MCF 10A (cell line): ENCODE measurements at regions of chr11 and their contacts with region 1.

Region 1: GRCh38 chr11:47373876-47374720 is 4.2 kb downstream of the SPI1 start:
- DNase-seq: peak; percentile 74
- H3K4me3 Mint-ChIP-seq: no peak overlapping the region
- H3K27ac Mint-ChIP-seq: no peak overlapping the region
- H3K4me1 Mint-ChIP-seq: peaks cover 9% of the 10 kb centered on the region
- H3K27me3 Mint-ChIP-seq: peaks cover 8% of the 10 kb centered on the region
- CTCF ChIP-seq: peak; percentile 93

Region 2: DNA sequence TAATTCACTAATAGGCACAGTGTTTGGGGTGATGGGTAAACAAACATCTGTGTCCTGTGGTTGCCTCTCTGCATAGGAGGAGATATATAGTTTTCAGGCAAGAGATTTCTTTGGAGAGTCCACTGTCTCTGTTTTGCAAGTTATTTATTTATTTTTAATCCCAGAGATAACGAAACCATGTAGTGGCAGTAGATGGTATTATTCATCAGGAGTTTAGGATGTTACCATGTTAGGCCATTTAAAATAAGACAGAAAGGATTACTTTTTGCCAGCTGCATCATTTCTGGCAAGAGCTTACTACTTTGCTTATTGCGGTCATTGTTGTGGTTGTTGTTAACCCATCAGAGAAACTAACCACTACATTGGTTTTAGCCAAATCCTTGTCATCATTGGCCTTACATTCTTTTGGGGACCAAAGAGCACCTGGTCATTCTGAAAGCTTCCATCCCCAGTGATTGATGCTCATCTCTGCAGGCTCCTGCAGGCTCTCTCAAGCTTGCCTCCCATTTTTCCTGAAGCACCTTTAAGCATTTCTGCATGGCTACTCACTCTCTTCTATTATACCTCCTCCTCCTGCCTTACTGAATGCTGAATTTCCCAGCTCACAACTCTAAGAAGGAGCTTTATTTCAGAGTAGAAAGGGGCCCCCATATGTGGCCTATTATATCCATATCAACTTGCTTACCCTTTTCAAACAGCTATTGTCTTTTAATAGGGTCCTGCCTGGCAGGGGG is 353.1 kb before region 1 on chr11:
- CTCF ChIA-PET with region 1: no interaction called
- POLR2A ChIA-PET with region 1: no interaction called
- intact Hi-C with region 1: no loop called
- DNase-seq: no peak
- H3K4me3 Mint-ChIP-seq: no peak overlapping the region
- H3K27ac Mint-ChIP-seq: no peak overlapping the region
- H3K4me1 Mint-ChIP-seq: no peaks in the 10 kb centered on the region
- H3K27me3 Mint-ChIP-seq: no peaks in the 10 kb centered on the region
- CTCF ChIP-seq: no peak

Region 3: DNA sequence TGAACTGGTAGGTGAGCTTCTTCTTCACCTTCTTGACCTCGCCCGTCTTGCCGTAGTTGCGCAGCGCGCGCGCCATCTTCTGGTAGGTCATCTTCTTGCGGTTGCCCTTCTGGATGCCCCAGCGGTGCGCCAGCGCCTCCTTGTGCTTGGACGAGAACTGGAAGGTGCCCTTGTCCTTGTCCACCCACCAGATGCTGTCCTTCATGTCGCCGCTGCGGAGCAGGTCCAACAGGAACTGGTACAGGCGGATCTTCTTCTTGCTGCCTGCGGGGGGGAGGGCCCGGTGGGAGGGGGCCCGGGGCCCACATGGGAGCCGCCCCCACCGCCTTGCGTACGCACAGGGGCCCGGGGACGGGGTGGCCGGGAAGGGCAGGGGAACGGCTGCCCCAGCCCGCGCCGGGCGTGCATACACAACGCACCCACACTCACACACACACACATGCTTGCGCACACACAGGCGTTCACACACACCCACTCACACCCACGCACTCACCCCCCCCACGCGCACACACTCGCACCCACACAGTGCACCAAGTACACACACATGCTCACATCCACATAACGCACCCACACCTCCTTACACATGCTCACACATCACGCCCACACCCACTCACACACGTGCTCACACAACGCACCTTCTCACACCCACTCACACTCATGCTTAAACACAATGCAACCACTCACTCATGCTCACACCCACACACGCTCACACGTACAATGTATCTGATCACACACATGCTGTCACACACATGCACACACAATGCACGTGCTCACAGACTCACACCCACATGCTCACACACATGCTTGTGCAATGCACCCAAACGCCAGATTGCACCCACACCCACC is 18.6 kb before region 1 on chr11:
- CTCF ChIA-PET with region 1: interaction called, 12 read pairs
- POLR2A ChIA-PET with region 1: no interaction called
- intact Hi-C with region 1: no loop called
- DNase-seq: peak; percentile 94
- H3K4me3 Mint-ChIP-seq: no peak overlapping the region
- H3K27ac Mint-ChIP-seq: no peak overlapping the region
- H3K4me1 Mint-ChIP-seq: peaks cover 5% of the 10 kb centered on the region
- H3K27me3 Mint-ChIP-seq: no peaks in the 10 kb centered on the region
- CTCF ChIP-seq: peak; percentile 99

Region 4: GRCh38 chr11:47387911-47388678 is 14.0 kb after region 1 on chr11:
- CTCF ChIA-PET with region 1: interaction called, 20 read pairs
- POLR2A ChIA-PET with region 1: interaction called, 3 read pairs
- intact Hi-C with region 1: no loop called
- DNase-seq: no peak
- H3K4me3 Mint-ChIP-seq: no peak overlapping the region
- H3K27ac Mint-ChIP-seq: no peak overlapping the region
- H3K4me1 Mint-ChIP-seq: no peaks in the 10 kb centered on the region
- H3K27me3 Mint-ChIP-seq: no peaks in the 10 kb centered on the region
- CTCF ChIP-seq: no peak

Region 5: GRCh38 chr11:47393150-47394049 is 19.3 kb after region 1 on chr11:
- CTCF ChIA-PET with region 1: interaction called, 21 read pairs
- POLR2A ChIA-PET with region 1: no interaction called
- intact Hi-C with region 1: no loop called
- DNase-seq: no peak
- H3K4me3 Mint-ChIP-seq: no peak overlapping the region
- H3K27ac Mint-ChIP-seq: no peak overlapping the region
- H3K4me1 Mint-ChIP-seq: no peaks in the 10 kb centered on the region
- H3K27me3 Mint-ChIP-seq: no peaks in the 10 kb centered on the region
- CTCF ChIP-seq: no peak

Region 6: GRCh38 chr11:47399860-47400767 is 26.0 kb after region 1 on chr11:
- CTCF ChIA-PET with region 1: interaction called, 28 read pairs
- POLR2A ChIA-PET with region 1: no interaction called
- intact Hi-C with region 1: no loop called
- DNase-seq: no peak
- H3K4me3 Mint-ChIP-seq: no peak overlapping the region
- H3K27ac Mint-ChIP-seq: no peak overlapping the region
- H3K4me1 Mint-ChIP-seq: no peaks in the 10 kb centered on the region
- H3K27me3 Mint-ChIP-seq: no peaks in the 10 kb centered on the region
- CTCF ChIP-seq: no peak

Region 7: GRCh38 chr11:47407746-47408590 is 33.9 kb after region 1 on chr11 and contains the start of gene SLC39A13:
- CTCF ChIA-PET with region 1: interaction called, 28 read pairs
- POLR2A ChIA-PET with region 1: interaction called, 5 read pairs
- intact Hi-C with region 1: loop called (anchors 1 kb)
- DNase-seq: peak; percentile 91
- H3K4me3 Mint-ChIP-seq: peak within 1 kb of the TSS; percentile 93
- H3K27ac Mint-ChIP-seq: peak within 1 kb of the TSS; percentile 98
- H3K4me1 Mint-ChIP-seq: peaks cover 24% of the 10 kb centered on the region
- H3K27me3 Mint-ChIP-seq: no peaks in the 10 kb centered on the region
- CTCF ChIP-seq: peak; percentile 79
- total RNA-seq, gene SLC39A13: 56.2 and 56.5 TPM in 2 replicates

Region 8: DNA sequence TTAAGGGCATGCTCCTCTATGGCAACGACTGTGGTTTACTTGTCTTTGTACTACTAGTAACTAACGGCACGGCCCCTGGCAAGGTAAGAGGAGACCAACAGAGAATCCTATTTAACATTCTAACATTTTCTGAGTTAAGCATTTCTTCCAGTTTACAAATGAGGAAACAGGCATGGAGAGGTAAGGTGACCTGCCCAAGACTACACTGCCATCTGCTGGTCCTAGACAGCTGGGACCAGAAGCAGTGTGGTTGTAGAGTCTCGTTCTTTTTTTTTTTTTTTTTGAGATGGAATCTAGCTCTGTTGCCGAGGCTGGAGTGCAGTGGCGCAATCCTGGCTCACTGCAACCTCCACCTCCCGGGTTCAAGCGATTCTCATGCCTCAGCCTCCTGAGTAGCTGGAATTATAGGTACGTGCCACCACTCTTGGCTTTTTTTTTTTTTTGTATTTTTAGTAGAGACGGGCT is 80.1 kb after region 1 on chr11:
- CTCF ChIA-PET with region 1: interaction called, 38 read pairs
- POLR2A ChIA-PET with region 1: no interaction called
- intact Hi-C with region 1: loop called (anchors 1 kb)
- DNase-seq: peak; percentile 85
- H3K4me3 Mint-ChIP-seq: no peak overlapping the region
- H3K27ac Mint-ChIP-seq: no peak overlapping the region
- H3K4me1 Mint-ChIP-seq: no peaks in the 10 kb centered on the region
- H3K27me3 Mint-ChIP-seq: no peaks in the 10 kb centered on the region
- CTCF ChIP-seq: peak; percentile 74